ENCODE measurements at regions of chr3 and their contacts with region 1.

Region 1: DNA sequence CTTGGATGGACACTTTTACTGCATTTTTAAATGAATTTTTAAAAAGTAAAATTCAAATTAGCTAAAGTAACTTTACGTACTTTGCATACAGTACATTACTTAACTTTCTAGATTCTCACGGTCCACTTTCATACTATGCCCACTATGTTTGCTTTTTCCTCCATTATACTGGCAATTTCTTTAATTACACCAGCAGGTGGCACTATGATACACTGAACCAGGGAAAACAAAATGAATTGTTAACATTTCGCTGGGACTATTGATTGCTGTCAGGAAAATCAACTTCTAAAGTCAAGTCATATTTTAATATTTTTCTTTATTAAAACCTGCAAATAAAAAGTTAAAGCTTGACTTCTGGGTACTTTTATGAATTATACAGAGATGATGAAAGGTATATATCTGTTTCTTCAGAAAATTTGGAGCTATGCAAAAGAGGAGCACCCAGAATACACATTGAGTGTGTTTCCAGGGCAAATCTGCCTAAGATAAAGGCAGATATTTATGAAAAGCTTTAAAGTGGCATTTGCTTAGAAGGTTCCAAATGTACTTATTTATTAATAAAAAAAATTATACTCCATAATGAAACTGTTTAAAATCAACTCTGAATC is 21.8 kb upstream of the POU1F1 start:
- DNase-seq: peak in 1 of 2 experiments; percentile 35
- H3K4me3 ChIP-seq: no peak overlapping the region
- H3K4me3 Mint-ChIP-seq: no peak overlapping the region
- H3K27ac Mint-ChIP-seq: no peak overlapping the region
- H3K4me1 ChIP-seq: no peaks in the 10 kb centered on the region
- H3K4me1 Mint-ChIP-seq: no peaks in the 10 kb centered on the region
- H3K27me3 ChIP-seq: no peaks in the 10 kb centered on the region
- H3K27me3 Mint-ChIP-seq: no peaks in the 10 kb centered on the region
- CTCF ChIP-seq: peak; percentile 49 to 52

Region 2: DNA sequence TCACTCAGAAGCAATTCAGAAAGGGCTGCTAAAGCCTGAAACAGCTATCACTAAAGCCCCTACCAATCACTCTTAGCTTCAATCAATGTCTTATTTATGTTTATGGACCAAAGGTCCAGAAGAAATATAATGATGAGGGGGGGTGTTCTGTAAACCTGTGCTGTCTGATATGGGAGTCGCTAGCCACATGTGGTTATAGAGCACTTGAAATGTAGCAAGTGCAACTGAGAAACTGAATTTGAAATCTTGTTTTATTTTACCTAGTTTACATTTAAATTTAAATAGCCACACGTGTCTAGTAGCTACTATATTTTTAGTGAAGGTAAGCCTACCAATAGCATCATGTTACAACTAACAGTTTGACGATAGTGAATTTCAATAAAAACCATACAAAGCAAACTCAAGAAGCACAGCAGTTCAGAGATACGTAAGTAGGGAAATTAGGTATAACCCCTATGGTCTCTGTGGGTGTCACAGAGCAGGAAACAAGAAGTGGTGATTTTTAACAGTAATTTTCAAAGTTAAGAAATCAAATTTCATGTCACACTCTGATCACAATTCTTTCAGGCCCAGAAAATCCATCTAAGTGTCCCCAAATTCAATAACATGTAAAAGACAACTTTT is 25.4 kb before region 1 on chr3:
- CTCF ChIA-PET with region 1: no interaction called
- POLR2A ChIA-PET with region 1: no interaction called
- intact Hi-C with region 1: no loop called
- DNase-seq: no peak
- H3K4me3 ChIP-seq: no peak overlapping the region
- H3K4me3 Mint-ChIP-seq: no peak overlapping the region
- H3K27ac Mint-ChIP-seq: no peak overlapping the region
- H3K4me1 ChIP-seq: no peaks in the 10 kb centered on the region
- H3K4me1 Mint-ChIP-seq: no peaks in the 10 kb centered on the region
- H3K27me3 ChIP-seq: no peaks in the 10 kb centered on the region
- H3K27me3 Mint-ChIP-seq: peaks cover 3% of the 10 kb centered on the region
- CTCF ChIP-seq: no peak

Region 3: DNA sequence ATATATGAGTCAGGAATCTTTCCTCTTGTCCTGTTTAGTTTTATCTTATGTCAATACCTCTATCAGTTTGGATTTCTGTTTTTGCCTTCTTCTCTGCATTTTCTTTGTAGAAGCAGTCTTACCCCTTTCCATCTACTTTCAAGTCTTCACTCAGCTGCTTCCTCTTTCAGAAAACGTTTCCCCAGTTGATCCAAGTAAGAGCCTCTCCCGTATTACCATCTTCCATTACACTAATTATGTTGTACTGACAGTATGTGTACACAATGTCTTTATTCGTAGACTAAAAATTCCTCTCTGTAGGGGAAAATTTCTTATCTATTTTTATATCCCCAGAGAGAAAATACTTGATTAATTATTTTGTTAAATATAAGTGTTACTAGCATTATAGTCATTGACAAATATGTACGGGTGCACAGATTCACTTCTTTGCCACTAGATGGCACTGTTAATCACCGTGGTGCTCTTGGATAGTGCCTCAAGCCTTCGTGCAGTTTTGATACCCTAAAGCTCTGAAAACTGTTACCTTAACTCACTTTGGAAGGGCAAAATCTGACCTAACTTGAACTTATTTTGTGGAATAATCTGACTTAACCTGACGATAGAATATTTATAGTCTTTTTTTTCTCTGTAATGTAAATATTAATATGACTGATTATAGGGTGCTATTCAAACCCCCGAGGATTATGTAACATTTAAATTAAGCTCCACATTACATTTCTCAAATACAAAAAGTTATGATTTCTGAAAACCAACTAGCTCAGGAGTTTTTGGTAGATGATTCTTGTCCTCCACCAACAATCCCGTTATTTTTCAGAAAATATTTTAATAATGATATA is 52.4 kb after region 1 on chr3:
- CTCF ChIA-PET with region 1: no interaction called
- POLR2A ChIA-PET with region 1: no interaction called
- intact Hi-C with region 1: loop called (anchors 1 kb)
- DNase-seq: peak; percentile 22 to 36
- H3K4me3 ChIP-seq: no peak overlapping the region
- H3K4me3 Mint-ChIP-seq: no peak overlapping the region
- H3K27ac Mint-ChIP-seq: no peak overlapping the region
- H3K4me1 ChIP-seq: peaks cover 8% of the 10 kb centered on the region; the same call in 1 of the 2 replicates
- H3K4me1 Mint-ChIP-seq: peaks cover 7% of the 10 kb centered on the region
- H3K27me3 ChIP-seq: no peaks in the 10 kb centered on the region
- H3K27me3 Mint-ChIP-seq: no peaks in the 10 kb centered on the region
- CTCF ChIP-seq: peak; percentile 77 to 80

Region 4: GRCh38 chr3:87437765-87438164 is 139.6 kb after region 1 on chr3:
- CTCF ChIA-PET with region 1: no interaction called
- POLR2A ChIA-PET with region 1: no interaction called
- intact Hi-C with region 1: loop called (anchors 10 kb)
- DNase-seq: no peak
- H3K4me3 ChIP-seq: no peak overlapping the region
- H3K4me3 Mint-ChIP-seq: no peak overlapping the region
- H3K27ac Mint-ChIP-seq: no peak overlapping the region
- H3K4me1 ChIP-seq: peaks cover 7% of the 10 kb centered on the region; the same call in 1 of the 2 replicates
- H3K4me1 Mint-ChIP-seq: peaks cover 6% of the 10 kb centered on the region
- H3K27me3 ChIP-seq: no peaks in the 10 kb centered on the region
- H3K27me3 Mint-ChIP-seq: no peaks in the 10 kb centered on the region
- CTCF ChIP-seq: no peak

Region 5: GRCh38 chr3:87503900-87504508 is 205.8 kb after region 1 on chr3:
- CTCF ChIA-PET with region 1: no interaction called
- POLR2A ChIA-PET with region 1: no interaction called
- intact Hi-C with region 1: loop called (anchors 1 kb)
- DNase-seq: peak in 1 of 2 experiments; percentile 57
- H3K4me3 ChIP-seq: no peak overlapping the region
- H3K4me3 Mint-ChIP-seq: no peak overlapping the region
- H3K27ac Mint-ChIP-seq: no peak overlapping the region
- H3K4me1 ChIP-seq: no peaks in the 10 kb centered on the region
- H3K4me1 Mint-ChIP-seq: no peaks in the 10 kb centered on the region
- H3K27me3 ChIP-seq: no peaks in the 10 kb centered on the region
- H3K27me3 Mint-ChIP-seq: no peaks in the 10 kb centered on the region
- CTCF ChIP-seq: peak; percentile 66 to 73

Region 6: DNA sequence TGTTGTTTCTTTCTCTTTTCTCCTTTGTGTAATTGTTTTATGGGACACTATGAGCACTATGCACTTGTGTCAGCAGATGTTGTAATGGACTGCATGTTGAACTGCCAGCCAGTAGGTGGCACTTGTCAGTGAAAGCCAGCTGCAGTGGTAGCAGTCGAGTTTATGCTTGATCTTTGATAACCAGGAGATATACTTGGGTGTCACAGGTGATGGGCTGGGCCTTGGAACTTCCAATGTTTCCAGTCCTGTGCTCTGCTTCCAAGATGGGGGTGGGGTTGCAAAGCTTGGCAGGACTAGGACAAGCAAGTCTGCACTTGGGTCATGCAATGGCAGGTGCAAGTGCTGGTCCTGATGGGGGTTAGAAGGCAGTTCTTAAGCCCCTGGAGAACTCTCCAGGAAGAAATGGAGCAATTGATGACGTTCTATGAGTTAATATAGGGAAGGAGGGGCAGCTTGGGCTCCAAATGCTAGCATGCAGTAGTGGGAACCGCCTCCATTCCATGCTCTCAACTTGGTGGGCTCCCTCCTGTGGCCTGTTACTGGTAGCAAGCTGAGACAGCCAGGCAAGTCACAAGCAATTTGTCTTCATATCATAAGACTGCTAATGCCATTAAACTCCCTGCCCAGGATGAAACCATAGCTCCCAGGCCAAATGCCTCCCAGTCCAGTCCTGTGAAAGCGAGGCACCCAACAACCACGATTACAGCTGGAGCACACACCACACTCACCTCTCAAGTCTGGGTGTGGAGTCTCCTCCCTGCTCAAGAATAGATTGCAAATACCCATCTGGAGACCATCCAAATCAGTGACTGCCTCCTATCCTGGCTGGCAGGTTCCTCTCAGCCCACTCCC is 473.4 kb after region 1 on chr3:
- CTCF ChIA-PET with region 1: no interaction called
- POLR2A ChIA-PET with region 1: no interaction called
- intact Hi-C with region 1: loop called (anchors 1 kb)
- DNase-seq: peak; percentile 45 to 46
- H3K4me3 ChIP-seq: no peak overlapping the region
- H3K4me3 Mint-ChIP-seq: no peak overlapping the region
- H3K27ac Mint-ChIP-seq: no peak overlapping the region
- H3K4me1 ChIP-seq: no peaks in the 10 kb centered on the region
- H3K4me1 Mint-ChIP-seq: no peaks in the 10 kb centered on the region
- H3K27me3 ChIP-seq: no peaks in the 10 kb centered on the region
- H3K27me3 Mint-ChIP-seq: peaks cover 6% of the 10 kb centered on the region
- CTCF ChIP-seq: peak; percentile 43 to 75

Region 7: GRCh38 chr3:87848003-87848402 is 549.8 kb after region 1 on chr3:
- CTCF ChIA-PET with region 1: no interaction called
- POLR2A ChIA-PET with region 1: no interaction called
- intact Hi-C with region 1: no loop called
- DNase-seq: no peak
- H3K4me3 ChIP-seq: no peak overlapping the region
- H3K4me3 Mint-ChIP-seq: no peak overlapping the region
- H3K27ac Mint-ChIP-seq: no peak overlapping the region
- H3K4me1 ChIP-seq: no peaks in the 10 kb centered on the region
- H3K4me1 Mint-ChIP-seq: no peaks in the 10 kb centered on the region
- H3K27me3 ChIP-seq: no peaks in the 10 kb centered on the region
- H3K27me3 Mint-ChIP-seq: no peaks in the 10 kb centered on the region
- CTCF ChIP-seq: no peak

Region 8: DNA sequence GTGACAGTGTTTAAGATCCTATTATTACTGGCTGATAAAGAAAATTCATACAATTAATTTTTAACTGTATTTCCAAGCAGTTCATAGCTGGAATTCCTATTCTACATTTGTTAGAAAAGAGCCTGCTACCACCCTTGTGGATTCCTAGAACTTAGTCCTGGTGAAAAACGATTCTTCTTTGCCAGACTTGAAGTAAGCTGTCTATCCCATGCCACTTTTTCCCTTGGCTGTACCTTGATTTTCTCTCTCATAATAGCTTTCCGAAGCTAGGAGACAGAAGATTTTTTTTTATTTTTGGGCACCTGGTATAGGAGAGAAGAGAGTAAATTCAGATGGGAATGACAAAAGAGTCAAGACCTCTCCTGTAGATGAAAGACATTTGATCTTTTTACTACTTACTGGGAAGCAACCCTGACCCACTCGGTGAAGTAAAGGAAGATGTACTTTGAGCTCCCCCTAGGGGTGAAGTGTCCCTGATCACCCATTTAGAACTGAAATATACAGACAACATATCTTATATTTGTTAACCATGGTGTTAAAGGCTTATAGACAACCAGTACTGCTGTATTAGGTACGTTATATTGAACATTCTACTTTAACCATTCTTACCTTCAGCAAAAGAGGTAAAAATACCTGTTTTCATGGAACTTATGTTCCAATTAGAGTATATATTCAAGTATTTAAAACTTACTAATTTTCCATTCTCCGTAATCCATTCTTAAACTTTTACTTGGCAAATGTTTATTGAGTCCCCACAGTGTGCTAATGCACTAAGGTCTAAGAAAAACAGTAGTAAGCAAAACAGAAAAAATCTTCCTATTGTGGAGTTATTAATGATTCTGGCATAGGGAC is 815.3 kb after region 1 on chr3:
- CTCF ChIA-PET with region 1: no interaction called
- POLR2A ChIA-PET with region 1: no interaction called
- intact Hi-C with region 1: loop called (anchors 1 kb)
- DNase-seq: peak; percentile 50 to 79
- H3K4me3 ChIP-seq: no peak overlapping the region
- H3K4me3 Mint-ChIP-seq: no peak overlapping the region
- H3K27ac Mint-ChIP-seq: no peak overlapping the region
- H3K4me1 ChIP-seq: no peaks in the 10 kb centered on the region
- H3K4me1 Mint-ChIP-seq: no peaks in the 10 kb centered on the region
- H3K27me3 ChIP-seq: no peaks in the 10 kb centered on the region
- H3K27me3 Mint-ChIP-seq: no peaks in the 10 kb centered on the region
- CTCF ChIP-seq: peak; percentile 49 to 70

Region 9: GRCh38 chr3:88180398-88180999 is 882.3 kb after region 1 on chr3:
- CTCF ChIA-PET with region 1: no interaction called
- POLR2A ChIA-PET with region 1: no interaction called
- intact Hi-C with region 1: loop called (anchors 5 kb)
- DNase-seq: peak in 1 of 2 experiments; percentile 22
- H3K4me3 ChIP-seq: no peak overlapping the region
- H3K4me3 Mint-ChIP-seq: no peak overlapping the region
- H3K27ac Mint-ChIP-seq: no peak overlapping the region
- H3K4me1 ChIP-seq: no peaks in the 10 kb centered on the region
- H3K4me1 Mint-ChIP-seq: no peaks in the 10 kb centered on the region
- H3K27me3 ChIP-seq: no peaks in the 10 kb centered on the region
- H3K27me3 Mint-ChIP-seq: peaks cover 2% of the 10 kb centered on the region
- CTCF ChIP-seq: peak in 1 of 2 experiments; percentile 38